Posterior vena cava (tissue), 2 donors: ENCODE measurements at regions of chr22 and their contacts with region 1.

Region 1: GRCh38 chr22:20495861-20496681 is 476 bp upstream of the KLHL22 start:
- DNase-seq: peak; percentile 98

Region 2: GRCh38 chr22:19970479-19971275 is 525.4 kb before region 1 on chr22:
- intact Hi-C with region 1: no loop called
- DNase-seq: peak; percentile 92

Region 3: GRCh38 chr22:20418211-20418788 is 77.8 kb before region 1 on chr22:
- intact Hi-C with region 1: loop called in 1 of 2 experiments (anchors 5 kb)
- DNase-seq: peak; percentile 94

Region 4: GRCh38 chr22:20437613-20438426 is 58.3 kb before region 1 on chr22 and contains the start of gene SCARF2:
- intact Hi-C with region 1: no loop called
- DNase-seq: peak; percentile 86
- total RNA-seq, gene SCARF2: 18.6 to 26.7 TPM